ENCODE measurements at regions of chr1 and their contacts with region 1.

Region 1: DNA sequence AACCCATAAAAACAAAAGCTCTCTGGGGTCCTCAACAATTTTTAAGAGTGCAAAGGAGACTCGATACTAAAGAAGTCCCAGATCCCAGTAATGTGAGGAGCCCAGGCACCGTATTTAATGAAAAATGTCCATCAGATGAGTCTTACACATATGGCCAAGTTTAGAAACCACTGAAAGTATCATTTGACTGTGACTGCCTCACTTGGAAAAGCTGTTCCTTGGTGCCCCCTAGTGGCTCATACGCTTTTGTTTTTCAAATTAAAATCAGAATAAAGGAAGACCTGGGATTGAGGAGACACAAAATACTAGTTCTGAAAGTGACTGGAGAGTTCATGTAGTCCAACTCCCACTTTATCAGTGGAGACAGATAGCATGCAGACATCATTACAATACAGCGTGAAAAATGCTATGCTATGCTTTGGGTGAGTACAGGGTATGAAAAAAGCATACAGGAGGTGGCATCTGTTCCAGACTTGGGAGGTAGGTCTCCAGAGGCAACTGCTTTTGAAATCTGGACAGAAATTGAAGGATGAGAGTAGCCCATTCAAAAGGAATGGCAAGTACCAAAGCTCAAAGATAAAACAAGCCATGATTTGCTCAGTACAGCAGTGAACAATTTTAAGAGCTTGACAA is 33.8 kb downstream of the GDAP2 start:
- DNase-seq: peak; percentile 74
- H3K4me3 ChIP-seq: no peak overlapping the region
- H3K27ac ChIP-seq: no peak overlapping the region
- H3K4me1 ChIP-seq: no peaks in the 10 kb centered on the region
- H3K27me3 ChIP-seq: no peaks in the 10 kb centered on the region
- CTCF ChIP-seq: peak; percentile 33 to 68 (median 62)
- EP300 ChIP-seq: no peak
- POLR2A ChIP-seq: no peak

Region 2: GRCh38 chr1:117001254-117001927 is 894.2 kb before region 1 on chr1 and contains the start of gene CD101:
- intact Hi-C with region 1: no loop called
- DNase-seq: no peak
- H3K4me3 ChIP-seq: no peak within 1 kb of the TSS
- H3K27ac ChIP-seq: no peak within 1 kb of the TSS
- H3K4me1 ChIP-seq: no peaks in the 10 kb centered on the region
- H3K27me3 ChIP-seq: no peaks in the 10 kb centered on the region
- CTCF ChIP-seq: no peak
- EP300 ChIP-seq: no peak
- POLR2A ChIP-seq: no peak
- total RNA-seq, gene CD101: 0.66 to 1.4 (median 1.0) TPM

Region 3: GRCh38 chr1:117512743-117513321 is 382.8 kb before region 1 on chr1:
- intact Hi-C with region 1: loop called (anchors 5 kb)
- DNase-seq: no peak
- H3K4me3 ChIP-seq: no peak overlapping the region
- H3K27ac ChIP-seq: no peak overlapping the region
- H3K4me1 ChIP-seq: no peaks in the 10 kb centered on the region
- H3K27me3 ChIP-seq: no peaks in the 10 kb centered on the region
- CTCF ChIP-seq: peak in 3 of 4 experiments; percentile 38 to 49 (median 44)
- EP300 ChIP-seq: no peak
- POLR2A ChIP-seq: no peak

Region 4: GRCh38 chr1:117599286-117600221 is 296.0 kb before region 1 on chr1:
- intact Hi-C with region 1: loop called (anchors 5 kb)
- DNase-seq: no peak
- H3K4me3 ChIP-seq: no peak overlapping the region
- H3K27ac ChIP-seq: no peak overlapping the region
- H3K4me1 ChIP-seq: no peaks in the 10 kb centered on the region
- H3K27me3 ChIP-seq: no peaks in the 10 kb centered on the region
- CTCF ChIP-seq: no peak
- EP300 ChIP-seq: no peak
- POLR2A ChIP-seq: no peak

Region 5: DNA sequence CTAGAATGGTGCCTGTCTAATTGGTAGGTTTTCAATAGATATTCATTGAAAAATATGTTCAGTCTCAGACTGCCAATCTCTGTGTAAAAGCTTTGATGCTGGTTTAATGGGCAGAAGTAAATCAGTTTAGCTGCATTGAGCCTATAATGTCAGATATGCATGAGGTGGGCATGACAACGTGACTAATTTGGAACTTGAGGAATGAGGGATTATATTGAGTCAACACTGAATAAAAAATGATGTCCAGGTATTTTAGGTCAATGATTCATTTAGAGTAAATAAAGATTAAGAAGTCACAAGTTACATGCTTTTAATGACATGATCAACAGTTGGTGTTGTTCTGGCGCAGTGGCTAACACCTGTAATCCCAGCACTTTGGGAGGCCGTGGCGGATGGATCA is 37.0 kb after region 1 on chr1:
- intact Hi-C with region 1: no loop called
- DNase-seq: no peak
- H3K4me3 ChIP-seq: no peak overlapping the region
- H3K27ac ChIP-seq: no peak overlapping the region
- H3K4me1 ChIP-seq: peaks cover 0 to 33% (median 23%) of the 10 kb centered on the region in 4 donors
- H3K27me3 ChIP-seq: no peaks in the 10 kb centered on the region
- CTCF ChIP-seq: no peak
- EP300 ChIP-seq: no peak
- POLR2A ChIP-seq: no peak